ENCODE measurements at regions of chr1 and their contacts with region 1.

Region 1: GRCh38 chr1:220099826-220100225 is 5.9 kb downstream of the IARS2 start:
- DNase-seq: no peak
- ATAC-seq: no peak
- H3K4me3 ChIP-seq: no peak overlapping the region
- H3K4me3 Mint-ChIP-seq: no peak overlapping the region
- H3K27ac ChIP-seq: no peak overlapping the region
- H3K27ac Mint-ChIP-seq: peak overlapping the region in 4 of 9 donors; percentile 19 to 75 (median 43)
- H3K4me1 ChIP-seq: peaks cover 8 to 11% of the 10 kb centered on the region in 2 donors
- H3K4me1 Mint-ChIP-seq: peaks cover 16 to 37% (median 25%) of the 10 kb centered on the region in 7 donors
- H3K27me3 ChIP-seq: no peaks in the 10 kb centered on the region
- H3K27me3 Mint-ChIP-seq: no peaks in the 10 kb centered on the region

Region 2: GRCh38 chr1:219990782-219991510 is 108.9 kb before region 1 on chr1:
- CTCF ChIA-PET with region 1: interaction called, 4 read pairs
- POLR2A ChIA-PET with region 1: no interaction called
- intact Hi-C with region 1: loop called in 1 of 2 experiments (anchors 10 kb)
- DNase-seq: peak in 1 of 9 donors; percentile 3
- ATAC-seq: no peak
- H3K4me3 ChIP-seq: no peak overlapping the region
- H3K4me3 Mint-ChIP-seq: no peak overlapping the region
- H3K27ac ChIP-seq: no peak overlapping the region
- H3K27ac Mint-ChIP-seq: peak overlapping the region in 2 of 9 donors; percentile 2 to 7
- H3K4me1 ChIP-seq: no peaks in the 10 kb centered on the region
- H3K4me1 Mint-ChIP-seq: peaks cover 0 to 4% (median 0%) of the 10 kb centered on the region in 7 donors
- H3K27me3 ChIP-seq: no peaks in the 10 kb centered on the region
- H3K27me3 Mint-ChIP-seq: no peaks in the 10 kb centered on the region

Region 3: GRCh38 chr1:220084460-220084859 is 15.4 kb before region 1 on chr1:
- CTCF ChIA-PET with region 1: no interaction called
- POLR2A ChIA-PET with region 1: interaction called, 8 read pairs
- intact Hi-C with region 1: loop called in 1 of 2 experiments (anchors 2 kb)
- DNase-seq: no peak
- ATAC-seq: no peak
- H3K4me3 ChIP-seq: no peak overlapping the region
- H3K4me3 Mint-ChIP-seq: no peak overlapping the region
- H3K27ac ChIP-seq: no peak overlapping the region
- H3K27ac Mint-ChIP-seq: no peak overlapping the region
- H3K4me1 ChIP-seq: peaks cover 0 to 5% of the 10 kb centered on the region in 2 donors
- H3K4me1 Mint-ChIP-seq: peaks cover 2 to 40% (median 24%) of the 10 kb centered on the region in 7 donors
- H3K27me3 ChIP-seq: no peaks in the 10 kb centered on the region
- H3K27me3 Mint-ChIP-seq: no peaks in the 10 kb centered on the region

Region 4: GRCh38 chr1:220119043-220119512 is 19.3 kb after region 1 on chr1:
- CTCF ChIA-PET with region 1: no interaction called
- POLR2A ChIA-PET with region 1: no interaction called
- intact Hi-C with region 1: loop called in 1 of 2 experiments (anchors 2 kb)
- DNase-seq: no peak
- ATAC-seq: no peak
- H3K4me3 ChIP-seq: no peak overlapping the region
- H3K4me3 Mint-ChIP-seq: no peak overlapping the region
- H3K27ac ChIP-seq: no peak overlapping the region
- H3K27ac Mint-ChIP-seq: no peak overlapping the region
- H3K4me1 ChIP-seq: no peaks in the 10 kb centered on the region
- H3K4me1 Mint-ChIP-seq: peaks cover 0 to 14% (median 3%) of the 10 kb centered on the region in 7 donors
- H3K27me3 ChIP-seq: no peaks in the 10 kb centered on the region
- H3K27me3 Mint-ChIP-seq: no peaks in the 10 kb centered on the region